Ovary (tissue), 10 donors: ENCODE measurements at regions of chr2 and their contacts with region 1.

Region 1: DNA sequence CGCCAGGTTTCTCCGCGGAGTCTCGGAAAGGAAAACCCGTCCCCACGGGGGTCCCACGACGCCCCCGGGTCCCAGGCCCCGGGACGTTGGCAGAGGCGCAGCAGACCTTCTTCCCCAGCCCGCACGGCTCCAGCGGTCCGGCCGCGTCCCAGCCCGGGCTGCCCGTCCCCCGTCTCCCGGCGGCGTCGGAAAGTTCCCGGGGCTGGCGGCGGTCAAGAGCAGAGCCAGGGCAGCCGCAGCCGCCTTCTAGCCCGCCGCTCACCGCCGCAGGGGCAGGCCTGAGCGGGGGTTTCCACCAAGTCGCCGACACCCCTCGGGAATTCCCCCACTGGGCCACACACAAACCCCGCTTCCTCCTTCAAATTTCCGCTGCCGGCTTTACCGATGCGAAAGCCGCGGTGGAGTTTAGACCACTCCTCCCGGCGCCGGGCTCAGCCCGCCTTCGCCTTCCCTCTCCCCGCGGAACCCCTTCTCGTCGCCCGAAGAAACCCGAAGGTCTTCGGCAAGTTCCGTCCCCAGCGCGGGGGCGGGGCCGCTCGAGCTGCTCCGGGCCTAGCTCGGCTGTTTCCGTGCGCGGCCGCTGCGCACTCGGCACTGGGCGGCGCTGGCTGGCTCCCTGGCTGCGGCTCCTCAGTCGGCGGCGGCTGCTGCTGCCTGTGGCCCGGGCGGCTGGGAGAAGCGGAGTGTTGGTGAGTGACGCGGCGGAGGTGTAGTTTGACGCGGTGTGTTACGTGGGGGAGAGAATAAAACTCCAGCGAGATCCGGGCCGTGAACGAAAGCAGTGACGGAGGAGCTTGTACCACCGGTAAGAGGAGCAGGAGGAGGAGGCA is at the start of gene CREB1:
- DNase-seq: peak; percentile 98 to 100 (median 99)
- H3K4me3 ChIP-seq: peak within 1 kb of the TSS; percentile 78
- H3K27ac ChIP-seq: peak within 1 kb of the TSS; percentile 93 to 96
- H3K4me1 ChIP-seq: peaks cover 5% of the 10 kb centered on the region
- H3K27me3 ChIP-seq: no peaks in the 10 kb centered on the region
- CTCF ChIP-seq: peak in 2 of 3 donors; percentile 7 to 39
- EP300 ChIP-seq: no peak
- POLR2A ChIP-seq: peak; percentile 96
- total RNA-seq, gene CREB1: 21.0 to 79.6 (median 62.1) TPM

Region 2: DNA sequence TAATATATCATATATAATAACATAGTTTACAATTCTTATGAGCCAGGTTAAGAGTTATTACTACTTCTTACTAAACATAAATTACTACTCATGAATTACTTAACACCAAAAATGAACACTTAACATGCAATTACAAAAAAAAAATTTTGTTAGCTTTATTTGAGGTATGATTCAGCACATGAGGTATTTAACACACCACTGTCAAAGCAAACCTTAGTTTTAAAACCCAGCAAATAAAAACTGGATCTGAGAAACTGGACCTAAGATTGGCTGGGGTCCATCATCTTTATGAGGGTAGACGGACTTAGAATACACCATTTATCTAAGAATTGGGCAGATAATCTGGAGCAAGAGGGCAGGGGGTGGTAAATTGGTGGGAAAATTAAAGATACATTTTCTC is 81.5 kb before region 1 on chr2:
- intact Hi-C with region 1: no loop called
- DNase-seq: no peak
- H3K4me3 ChIP-seq: no peak overlapping the region
- H3K27ac ChIP-seq: no peak overlapping the region
- H3K4me1 ChIP-seq: no peaks in the 10 kb centered on the region
- H3K27me3 ChIP-seq: no peaks in the 10 kb centered on the region
- CTCF ChIP-seq: no peak
- EP300 ChIP-seq: no peak
- POLR2A ChIP-seq: no peak

Region 3: GRCh38 chr2:207625018-207625907 is 95.7 kb after region 1 on chr2 and contains the start of gene METTL21A:
- intact Hi-C with region 1: loop called in 3 of 4 experiments (anchors 10 kb)
- DNase-seq: peak; percentile 84 to 90 (median 88)
- H3K4me3 ChIP-seq: peak within 1 kb of the TSS; percentile 73
- H3K27ac ChIP-seq: peak within 1 kb of the TSS; percentile 72 to 82
- H3K4me1 ChIP-seq: peaks cover 4% of the 10 kb centered on the region
- H3K27me3 ChIP-seq: no peaks in the 10 kb centered on the region
- CTCF ChIP-seq: peak in 2 of 3 donors; percentile 31 to 65
- EP300 ChIP-seq: no peak
- POLR2A ChIP-seq: peak; percentile 54
- total RNA-seq, gene METTL21A: 8.3 to 32.9 (median 11.2) TPM

Region 4: GRCh38 chr2:207710814-207711740 is 181.5 kb after region 1 on chr2 and contains the start of gene CCNYL1:
- intact Hi-C with region 1: loop called in 1 of 4 experiments (anchors 10 kb)
- DNase-seq: peak; percentile 99
- H3K4me3 ChIP-seq: peak within 1 kb of the TSS; percentile 97
- H3K27ac ChIP-seq: peak within 1 kb of the TSS in 1 of 2 donors; percentile 37
- H3K4me1 ChIP-seq: peaks cover 3% of the 10 kb centered on the region
- H3K27me3 ChIP-seq: no peaks in the 10 kb centered on the region
- CTCF ChIP-seq: peak; percentile 26 to 75 (median 66)
- EP300 ChIP-seq: no peak
- POLR2A ChIP-seq: peak; percentile 72
- total RNA-seq, gene CCNYL1: 5.4 to 13.0 (median 7.4) TPM